CD14-positive monocyte (primary cell): ENCODE measurements at regions of chrX and their contacts with region 1.

Region 1: GRCh38 chrX:16123222-16123786 is at the start of gene GRPR:
- DNase-seq: peak; percentile 68 to 84 (median 81)
- H3K4me3 ChIP-seq: no peak within 1 kb of the TSS
- H3K4me3 Mint-ChIP-seq: peak within 1 kb of the TSS; percentile 39 to 54
- H3K27ac ChIP-seq: no peak within 1 kb of the TSS
- H3K27ac Mint-ChIP-seq: peak within 1 kb of the TSS in 2 of 7 donors; percentile 18 to 24
- H3K4me1 ChIP-seq: peaks cover 37% of the 10 kb centered on the region in 2 donors
- H3K4me1 Mint-ChIP-seq: peaks cover 31% of the 10 kb centered on the region
- H3K27me3 ChIP-seq: peaks cover 3 to 37% of the 10 kb centered on the region in 2 donors
- H3K27me3 Mint-ChIP-seq: peaks cover 2 to 39% (median 7%) of the 10 kb centered on the region in 3 donors
- CTCF ChIP-seq: peak; percentile 71
- polyA plus RNA-seq, gene GRPR: 0.35 to 0.55 (median 0.46) TPM

Region 2: GRCh38 chrX:15911734-15912550 is 211.4 kb before region 1 on chrX:
- intact Hi-C with region 1: loop called in 1 of 2 experiments (anchors 10 kb)
- DNase-seq: peak; percentile 94 to 95 (median 95)
- H3K4me3 ChIP-seq: peak overlapping the region in 1 of 3 experiments; percentile 28
- H3K4me3 Mint-ChIP-seq: no peak overlapping the region
- H3K27ac ChIP-seq: peak overlapping the region; percentile 65 to 67
- H3K27ac Mint-ChIP-seq: peak overlapping the region; percentile 85 to 96 (median 92)
- H3K4me1 ChIP-seq: peaks cover 89 to 93% of the 10 kb centered on the region in 2 donors
- H3K4me1 Mint-ChIP-seq: peaks cover 64% of the 10 kb centered on the region
- H3K27me3 ChIP-seq: peaks cover 0 to 22% of the 10 kb centered on the region in 2 donors
- H3K27me3 Mint-ChIP-seq: peaks cover 0 to 28% (median 0%) of the 10 kb centered on the region in 3 donors
- CTCF ChIP-seq: no peak

Region 3: DNA sequence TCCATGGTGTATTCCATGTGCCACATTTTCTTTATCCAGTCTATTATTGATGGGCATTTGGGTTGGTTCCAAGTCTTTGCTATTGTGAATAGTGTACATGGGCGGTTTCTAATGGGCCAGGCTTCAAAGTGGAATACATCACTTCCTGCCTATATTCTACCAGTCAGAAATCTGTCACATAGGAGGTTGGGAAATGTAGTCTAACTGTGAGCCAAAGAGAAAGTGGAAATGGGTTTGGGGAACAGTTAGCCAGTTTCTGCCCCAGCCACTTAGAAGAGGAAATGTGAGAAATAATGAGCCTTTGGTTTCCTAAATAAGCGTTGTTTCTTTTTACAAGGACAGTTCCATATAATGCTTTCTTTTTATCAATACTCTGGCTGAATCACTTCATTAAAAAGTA is 183.6 kb before region 1 on chrX:
- intact Hi-C with region 1: no loop called
- DNase-seq: peak; percentile 66 to 82 (median 79)
- H3K4me3 ChIP-seq: peak overlapping the region in 1 of 3 experiments; percentile 13
- H3K4me3 Mint-ChIP-seq: no peak overlapping the region
- H3K27ac ChIP-seq: no peak overlapping the region
- H3K27ac Mint-ChIP-seq: peak overlapping the region; percentile 37 to 91 (median 62)
- H3K4me1 ChIP-seq: peaks cover 8 to 13% of the 10 kb centered on the region in 2 donors
- H3K4me1 Mint-ChIP-seq: peaks cover 13% of the 10 kb centered on the region
- H3K27me3 ChIP-seq: peaks cover 0 to 64% of the 10 kb centered on the region in 2 donors
- H3K27me3 Mint-ChIP-seq: peaks cover 0 to 59% (median 0%) of the 10 kb centered on the region in 3 donors
- CTCF ChIP-seq: no peak

Region 4: GRCh38 chrX:16042980-16043379 is 80.3 kb before region 1 on chrX:
- intact Hi-C with region 1: no loop called
- DNase-seq: no peak
- H3K4me3 ChIP-seq: no peak overlapping the region
- H3K4me3 Mint-ChIP-seq: no peak overlapping the region
- H3K27ac ChIP-seq: no peak overlapping the region
- H3K27ac Mint-ChIP-seq: no peak overlapping the region
- H3K4me1 ChIP-seq: no peaks in the 10 kb centered on the region
- H3K4me1 Mint-ChIP-seq: peaks cover 10% of the 10 kb centered on the region
- H3K27me3 ChIP-seq: peaks cover 0 to 35% of the 10 kb centered on the region in 2 donors
- H3K27me3 Mint-ChIP-seq: peaks cover 0 to 35% (median 2%) of the 10 kb centered on the region in 3 donors
- CTCF ChIP-seq: no peak